Transverse colon (tissue), 4 donors: ENCODE measurements at regions of chr4 and their contacts with region 1.

Region 1: DNA sequence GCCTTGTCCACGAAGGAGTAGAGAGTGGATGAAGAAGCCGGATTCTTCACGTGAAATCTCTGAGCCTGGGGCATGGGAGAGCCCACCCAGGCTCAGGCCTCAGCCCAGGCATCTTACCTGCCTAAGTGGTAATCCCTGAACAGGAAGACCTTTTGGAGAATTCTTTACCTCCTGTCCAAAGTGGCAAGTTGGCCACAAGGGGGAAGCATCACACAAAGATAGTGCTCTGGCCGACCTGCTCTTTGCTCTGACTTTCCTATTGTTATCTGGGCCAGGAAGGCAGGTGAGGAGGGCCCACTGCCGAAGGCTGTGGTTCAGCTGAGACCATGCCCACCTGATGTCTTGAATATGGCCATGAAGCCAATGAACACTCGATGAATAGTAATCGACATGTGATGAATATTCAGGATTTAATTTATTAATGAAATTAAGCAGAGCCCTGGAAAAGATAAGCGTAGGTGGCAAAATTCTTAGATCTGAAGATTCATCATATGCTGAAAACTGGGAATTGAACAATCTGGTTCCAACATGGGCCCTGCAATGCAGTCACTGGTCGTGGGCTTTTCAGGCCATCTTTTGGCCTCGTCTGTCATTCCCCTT is 93.8 kb downstream of the PDGFRA start:
- DNase-seq: peak; percentile 67
- H3K4me3 ChIP-seq: no peak overlapping the region
- H3K27ac ChIP-seq: no peak overlapping the region
- H3K4me1 ChIP-seq: no peaks in the 10 kb centered on the region
- H3K27me3 ChIP-seq: no peaks in the 10 kb centered on the region
- CTCF ChIP-seq: peak; percentile 51 to 64 (median 61)
- EP300 ChIP-seq: no peak
- POLR2A ChIP-seq: no peak

Region 2: GRCh38 chr4:53714236-53715140 is 608.4 kb before region 1 on chr4:
- in situ Hi-C with region 1: no loop called
- intact Hi-C with region 1: no loop called
- DNase-seq: no peak
- H3K4me3 ChIP-seq: no peak overlapping the region
- H3K27ac ChIP-seq: no peak overlapping the region
- H3K4me1 ChIP-seq: no peaks in the 10 kb centered on the region
- H3K27me3 ChIP-seq: no peaks in the 10 kb centered on the region
- CTCF ChIP-seq: no peak
- EP300 ChIP-seq: no peak
- POLR2A ChIP-seq: no peak

Region 3: DNA sequence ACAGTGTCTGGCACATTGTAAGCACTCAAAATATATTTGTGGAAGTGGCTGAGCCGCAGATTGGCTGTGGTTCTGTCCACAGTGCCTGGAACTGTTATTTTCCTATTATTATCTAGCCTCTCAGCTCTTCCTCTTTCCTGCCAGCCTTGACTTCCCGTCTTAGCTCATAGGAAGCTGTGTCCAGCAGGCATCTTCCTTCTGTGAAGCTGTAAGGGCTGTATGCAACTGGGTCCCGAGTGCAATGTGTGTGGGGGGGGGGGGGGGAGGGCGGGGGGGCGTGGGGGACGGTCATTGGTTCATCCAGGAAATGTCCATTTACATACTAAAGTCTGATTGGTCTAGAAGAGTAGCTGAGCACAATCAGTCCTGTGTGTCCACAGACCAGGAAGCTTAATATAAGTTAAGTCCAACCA is 116.9 kb after region 1 on chr4:
- in situ Hi-C with region 1: loop called in 1 of 4 experiments (anchors 10 kb)
- intact Hi-C with region 1: loop called (anchors 10 kb)
- DNase-seq: peak; percentile 9
- H3K4me3 ChIP-seq: no peak overlapping the region
- H3K27ac ChIP-seq: peak overlapping the region in 2 of 4 donors; percentile 4 to 20
- H3K4me1 ChIP-seq: peaks cover 0 to 3% (median 0%) of the 10 kb centered on the region in 4 donors
- H3K27me3 ChIP-seq: no peaks in the 10 kb centered on the region
- CTCF ChIP-seq: no peak
- EP300 ChIP-seq: no peak
- POLR2A ChIP-seq: no peak

Region 4: DNA sequence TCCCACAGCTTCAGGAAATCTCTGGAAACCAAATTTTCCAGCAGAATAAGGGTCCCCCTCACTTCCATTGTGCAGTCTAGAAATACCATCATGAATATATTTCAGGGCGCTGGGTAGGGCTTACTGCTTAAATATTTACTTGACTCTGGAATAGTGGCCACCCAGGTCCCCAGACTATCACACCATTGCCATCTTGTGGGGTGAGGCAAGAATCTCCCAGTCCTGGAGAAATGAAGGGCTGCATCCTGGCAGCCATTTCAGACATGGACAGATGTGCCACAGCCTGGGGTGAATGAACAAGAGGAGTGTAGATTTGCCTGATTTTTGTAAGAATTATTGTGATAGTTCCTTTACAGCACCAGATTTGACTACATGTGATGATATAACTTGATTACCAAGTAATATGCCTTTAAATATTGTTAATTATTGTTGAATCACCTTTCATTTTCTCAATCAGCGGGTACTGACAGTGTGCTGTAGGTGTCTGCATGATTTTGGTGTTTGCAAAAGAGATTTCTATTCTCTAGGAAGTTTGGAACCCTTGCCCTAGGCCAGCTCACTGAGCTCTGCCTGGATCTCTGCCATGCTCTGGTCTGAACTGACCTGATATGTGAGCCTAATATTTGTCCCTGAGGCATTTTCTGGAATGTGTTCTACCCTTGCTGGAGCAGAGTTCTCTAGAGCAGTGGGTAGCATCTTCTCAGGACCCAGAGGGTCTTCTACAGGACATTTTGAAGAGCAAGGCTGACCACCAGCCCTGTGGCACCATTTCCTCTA is 518.3 kb after region 1 on chr4:
- in situ Hi-C with region 1: loop called in 1 of 4 experiments (anchors 25 kb)
- intact Hi-C with region 1: no loop called
- DNase-seq: peak; percentile 9
- H3K4me3 ChIP-seq: no peak overlapping the region
- H3K27ac ChIP-seq: no peak overlapping the region
- H3K4me1 ChIP-seq: no peaks in the 10 kb centered on the region
- H3K27me3 ChIP-seq: no peaks in the 10 kb centered on the region
- CTCF ChIP-seq: peak in 1 of 5 experiments; percentile 6
- EP300 ChIP-seq: no peak
- POLR2A ChIP-seq: no peak

Region 5: DNA sequence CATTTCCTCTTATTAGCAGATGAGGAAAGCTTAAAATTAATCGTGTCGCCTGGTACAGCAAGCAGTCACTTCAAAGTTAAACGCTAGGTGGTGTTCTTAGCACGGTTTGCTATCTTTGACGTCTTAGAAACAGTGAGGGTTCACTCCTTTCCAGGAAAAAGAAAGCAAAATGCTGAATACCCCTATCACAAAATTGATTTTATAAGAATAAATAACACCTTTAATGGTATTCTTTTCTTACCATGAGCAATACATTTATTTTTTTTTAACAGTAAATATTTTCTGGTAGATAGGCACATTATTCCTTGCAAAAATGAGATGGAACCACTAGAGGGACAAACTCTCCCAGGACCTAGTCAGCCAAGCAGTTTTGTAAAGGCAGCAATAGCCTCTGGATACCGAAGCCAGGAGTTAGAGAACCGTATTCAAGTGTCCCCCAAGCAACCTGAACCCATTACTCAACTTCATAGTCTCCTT is 648.6 kb after region 1 on chr4:
- in situ Hi-C with region 1: loop called in 2 of 4 experiments (anchors 25 kb)
- intact Hi-C with region 1: no loop called
- DNase-seq: no peak
- H3K4me3 ChIP-seq: no peak overlapping the region
- H3K27ac ChIP-seq: no peak overlapping the region
- H3K4me1 ChIP-seq: no peaks in the 10 kb centered on the region
- H3K27me3 ChIP-seq: no peaks in the 10 kb centered on the region
- CTCF ChIP-seq: peak; percentile 36 to 49 (median 39)
- EP300 ChIP-seq: no peak
- POLR2A ChIP-seq: no peak

Region 6: GRCh38 chr4:55312489-55313101 is 989.7 kb after region 1 on chr4:
- in situ Hi-C with region 1: loop called in 1 of 4 experiments (anchors 25 kb)
- intact Hi-C with region 1: no loop called
- DNase-seq: peak; percentile 33
- H3K4me3 ChIP-seq: no peak overlapping the region
- H3K27ac ChIP-seq: no peak overlapping the region
- H3K4me1 ChIP-seq: no peaks in the 10 kb centered on the region
- H3K27me3 ChIP-seq: no peaks in the 10 kb centered on the region
- CTCF ChIP-seq: peak; percentile 51 to 61 (median 53)
- EP300 ChIP-seq: no peak
- POLR2A ChIP-seq: no peak